ENCODE measurements at regions of chr6 and their contacts with region 1.

Region 1: GRCh38 chr6:118893807-118894424 is at the start of gene ASF1A:
- DNase-seq: peak; percentile 97 to 98 (median 97)
- H3K4me3 ChIP-seq: peak within 1 kb of the TSS; percentile 63 to 86
- H3K4me3 Mint-ChIP-seq: peak within 1 kb of the TSS; percentile 89 to 100 (median 96)
- H3K27ac ChIP-seq: peak within 1 kb of the TSS; percentile 83
- H3K27ac Mint-ChIP-seq: peak within 1 kb of the TSS; percentile 96 to 99 (median 98)
- H3K4me1 ChIP-seq: peaks cover 72% of the 10 kb centered on the region
- H3K4me1 Mint-ChIP-seq: peaks cover 48 to 78% (median 57%) of the 10 kb centered on the region in 4 donors
- H3K27me3 ChIP-seq: no peaks in the 10 kb centered on the region
- H3K27me3 Mint-ChIP-seq: peaks cover 0 to 1% of the 10 kb centered on the region in 2 donors
- total RNA-seq, gene ASF1A: 64.0 to 66.6 TPM

Region 2: GRCh38 chr6:117233145-117233544 is 1660.8 kb before region 1 on chr6:
- CTCF ChIA-PET with region 1: no interaction called
- POLR2A ChIA-PET with region 1: no interaction called
- intact Hi-C with region 1: no loop called
- DNase-seq: no peak
- H3K4me3 ChIP-seq: no peak overlapping the region
- H3K4me3 Mint-ChIP-seq: no peak overlapping the region
- H3K27ac ChIP-seq: no peak overlapping the region
- H3K27ac Mint-ChIP-seq: no peak overlapping the region
- H3K4me1 ChIP-seq: no peaks in the 10 kb centered on the region
- H3K4me1 Mint-ChIP-seq: no peaks in the 10 kb centered on the region
- H3K27me3 ChIP-seq: no peaks in the 10 kb centered on the region
- H3K27me3 Mint-ChIP-seq: peaks cover 2 to 3% of the 10 kb centered on the region in 2 donors

Region 3: DNA sequence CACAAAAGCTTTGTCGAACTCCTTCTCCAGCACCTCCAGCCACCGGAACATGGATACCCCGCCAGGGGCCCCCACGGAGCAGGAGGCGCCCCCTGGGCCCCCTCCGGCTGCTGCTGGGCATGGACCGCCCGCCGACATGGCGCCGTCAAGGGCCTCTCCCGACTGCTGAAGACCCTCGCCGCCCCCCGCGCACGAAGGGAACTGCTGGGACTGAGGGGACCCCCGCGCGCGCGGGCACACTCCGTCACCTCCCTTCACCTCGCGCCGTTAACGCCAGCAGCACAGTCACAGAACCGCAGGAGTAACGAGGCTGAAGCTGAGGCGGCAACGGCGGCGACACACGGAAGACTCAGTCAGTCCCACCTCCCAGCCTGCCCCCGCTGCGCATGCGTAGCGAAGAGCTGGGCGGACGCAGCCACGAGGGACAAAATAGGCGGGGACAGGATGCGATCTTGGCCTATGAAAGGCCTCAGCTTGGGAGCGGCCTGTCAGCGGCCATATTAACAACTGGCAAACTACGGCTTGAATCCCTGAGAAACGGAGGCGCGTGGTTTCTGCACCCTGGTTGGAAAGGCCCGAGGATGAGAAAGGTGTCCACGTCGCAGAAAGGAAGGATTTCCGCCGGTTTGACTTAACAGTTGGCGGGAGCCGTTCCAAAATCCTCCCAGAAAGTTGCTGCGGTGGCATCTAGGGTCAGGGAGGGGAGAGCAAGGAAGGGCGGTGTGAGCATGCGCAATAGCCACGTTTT is 1291.6 kb before region 1 on chr6 and contains the start of gene GOPC:
- CTCF ChIA-PET with region 1: no interaction called
- POLR2A ChIA-PET with region 1: interaction called, 3 read pairs
- intact Hi-C with region 1: loop called (anchors 1 kb)
- DNase-seq: peak; percentile 94 to 98 (median 97)
- H3K4me3 ChIP-seq: peak within 1 kb of the TSS; percentile 53 to 87
- H3K4me3 Mint-ChIP-seq: peak within 1 kb of the TSS; percentile 96 to 100 (median 100)
- H3K27ac ChIP-seq: peak within 1 kb of the TSS; percentile 75
- H3K27ac Mint-ChIP-seq: peak within 1 kb of the TSS; percentile 93 to 100 (median 99)
- H3K4me1 ChIP-seq: peaks cover 38% of the 10 kb centered on the region
- H3K4me1 Mint-ChIP-seq: peaks cover 34 to 52% (median 43%) of the 10 kb centered on the region in 4 donors
- H3K27me3 ChIP-seq: no peaks in the 10 kb centered on the region
- H3K27me3 Mint-ChIP-seq: peaks cover 0 to 3% of the 10 kb centered on the region in 2 donors
- total RNA-seq, gene GOPC: 37.7 to 37.8 TPM

Region 4: DNA sequence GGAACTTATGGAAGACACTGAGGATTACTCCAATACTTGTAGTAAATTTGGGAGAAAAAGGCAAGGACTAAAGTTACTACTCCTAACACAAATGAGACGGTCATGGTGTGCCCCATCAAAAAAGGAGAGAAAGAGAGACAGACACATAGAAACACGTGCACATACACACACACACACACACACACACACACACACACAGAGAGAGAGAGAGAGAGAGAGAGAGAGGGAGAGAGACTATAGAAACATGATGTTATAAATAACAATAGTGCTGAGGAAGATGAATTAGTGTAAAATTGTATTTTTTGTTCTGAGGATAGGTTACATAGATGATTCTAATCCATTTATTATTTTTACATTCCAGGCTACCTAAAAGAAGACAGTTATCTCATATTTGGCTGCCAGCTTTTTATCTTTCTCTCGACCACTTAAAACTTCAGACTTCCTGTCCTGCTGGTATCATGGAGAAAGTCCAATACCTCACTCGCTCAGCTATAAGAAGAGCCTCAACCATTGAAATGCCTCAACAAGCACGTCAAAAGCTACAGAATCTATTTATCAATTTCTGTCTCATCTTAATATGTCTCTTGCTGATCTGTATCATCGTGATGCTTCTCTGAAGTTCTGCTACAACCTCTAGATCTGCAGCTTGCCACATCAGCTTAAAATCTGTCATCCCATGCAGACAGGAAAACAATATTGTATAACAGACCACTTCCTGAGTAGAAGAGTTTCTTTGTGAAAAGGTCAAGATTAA is 335.3 kb before region 1 on chr6:
- CTCF ChIA-PET with region 1: interaction called, 4 read pairs
- POLR2A ChIA-PET with region 1: interaction called, 15 read pairs
- intact Hi-C with region 1: no loop called
- DNase-seq: peak; percentile 61 to 77 (median 64)
- H3K4me3 ChIP-seq: peak overlapping the region in 1 of 2 donors; percentile 21
- H3K4me3 Mint-ChIP-seq: peak overlapping the region; percentile 61 to 90 (median 80)
- H3K27ac ChIP-seq: peak overlapping the region; percentile 53
- H3K27ac Mint-ChIP-seq: peak overlapping the region; percentile 83 to 99 (median 97)
- H3K4me1 ChIP-seq: peaks cover 30% of the 10 kb centered on the region
- H3K4me1 Mint-ChIP-seq: peaks cover 31 to 57% (median 35%) of the 10 kb centered on the region in 4 donors
- H3K27me3 ChIP-seq: no peaks in the 10 kb centered on the region
- H3K27me3 Mint-ChIP-seq: no peaks in the 10 kb centered on the region

Region 5: GRCh38 chr6:118787724-118788423 is 106.0 kb before region 1 on chr6:
- CTCF ChIA-PET with region 1: interaction called, 5 read pairs
- POLR2A ChIA-PET with region 1: interaction called, 17 read pairs
- intact Hi-C with region 1: no loop called
- DNase-seq: peak; percentile 38 to 58 (median 54)
- H3K4me3 ChIP-seq: no peak overlapping the region
- H3K4me3 Mint-ChIP-seq: peak overlapping the region in 7 of 8 donors; percentile 8 to 74 (median 59)
- H3K27ac ChIP-seq: peak overlapping the region; percentile 18
- H3K27ac Mint-ChIP-seq: peak overlapping the region; percentile 77 to 97 (median 95)
- H3K4me1 ChIP-seq: peaks cover 29% of the 10 kb centered on the region
- H3K4me1 Mint-ChIP-seq: peaks cover 27 to 40% (median 34%) of the 10 kb centered on the region in 4 donors
- H3K27me3 ChIP-seq: no peaks in the 10 kb centered on the region
- H3K27me3 Mint-ChIP-seq: no peaks in the 10 kb centered on the region

Region 6: DNA sequence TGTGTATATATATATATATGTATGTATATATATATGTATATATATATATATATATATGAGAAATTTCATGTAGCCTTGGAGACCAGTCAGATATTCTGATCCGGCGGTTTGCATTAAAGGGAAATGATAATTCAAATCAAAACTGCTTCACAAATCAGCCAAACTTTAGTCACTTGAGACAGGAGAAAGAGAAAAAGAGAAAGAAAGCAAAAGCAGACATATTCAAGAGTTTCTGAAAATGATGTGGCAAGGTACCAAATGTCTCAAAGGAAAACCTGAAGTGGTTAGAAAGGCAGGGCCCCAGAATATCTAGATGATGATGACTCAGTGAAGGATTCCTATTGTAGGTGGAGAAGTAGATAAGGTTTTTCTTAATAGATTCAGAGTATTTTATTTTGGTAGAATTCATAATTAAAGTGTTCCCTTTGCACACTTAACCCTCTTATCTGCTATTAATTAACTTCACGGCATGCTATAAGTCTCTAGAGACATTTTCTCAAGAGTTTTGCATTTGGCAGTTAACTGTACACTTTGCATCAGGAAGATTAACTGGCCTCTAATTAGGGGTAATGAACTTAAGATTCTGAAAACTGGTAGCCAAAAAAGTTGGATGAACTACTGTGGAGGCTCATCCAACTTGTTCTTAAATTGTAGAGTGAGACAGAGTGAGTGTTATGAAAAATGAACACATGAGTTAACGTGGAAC is 50.1 kb before region 1 on chr6:
- CTCF ChIA-PET with region 1: interaction called, 3 read pairs
- POLR2A ChIA-PET with region 1: interaction called, 11 read pairs
- intact Hi-C with region 1: no loop called
- DNase-seq: no peak
- H3K4me3 ChIP-seq: no peak overlapping the region
- H3K4me3 Mint-ChIP-seq: no peak overlapping the region
- H3K27ac ChIP-seq: no peak overlapping the region
- H3K27ac Mint-ChIP-seq: peak overlapping the region in 3 of 7 donors; percentile 2 to 49 (median 36)
- H3K4me1 ChIP-seq: peaks cover 21% of the 10 kb centered on the region
- H3K4me1 Mint-ChIP-seq: peaks cover 18 to 27% (median 23%) of the 10 kb centered on the region in 4 donors
- H3K27me3 ChIP-seq: no peaks in the 10 kb centered on the region
- H3K27me3 Mint-ChIP-seq: no peaks in the 10 kb centered on the region

Region 7: DNA sequence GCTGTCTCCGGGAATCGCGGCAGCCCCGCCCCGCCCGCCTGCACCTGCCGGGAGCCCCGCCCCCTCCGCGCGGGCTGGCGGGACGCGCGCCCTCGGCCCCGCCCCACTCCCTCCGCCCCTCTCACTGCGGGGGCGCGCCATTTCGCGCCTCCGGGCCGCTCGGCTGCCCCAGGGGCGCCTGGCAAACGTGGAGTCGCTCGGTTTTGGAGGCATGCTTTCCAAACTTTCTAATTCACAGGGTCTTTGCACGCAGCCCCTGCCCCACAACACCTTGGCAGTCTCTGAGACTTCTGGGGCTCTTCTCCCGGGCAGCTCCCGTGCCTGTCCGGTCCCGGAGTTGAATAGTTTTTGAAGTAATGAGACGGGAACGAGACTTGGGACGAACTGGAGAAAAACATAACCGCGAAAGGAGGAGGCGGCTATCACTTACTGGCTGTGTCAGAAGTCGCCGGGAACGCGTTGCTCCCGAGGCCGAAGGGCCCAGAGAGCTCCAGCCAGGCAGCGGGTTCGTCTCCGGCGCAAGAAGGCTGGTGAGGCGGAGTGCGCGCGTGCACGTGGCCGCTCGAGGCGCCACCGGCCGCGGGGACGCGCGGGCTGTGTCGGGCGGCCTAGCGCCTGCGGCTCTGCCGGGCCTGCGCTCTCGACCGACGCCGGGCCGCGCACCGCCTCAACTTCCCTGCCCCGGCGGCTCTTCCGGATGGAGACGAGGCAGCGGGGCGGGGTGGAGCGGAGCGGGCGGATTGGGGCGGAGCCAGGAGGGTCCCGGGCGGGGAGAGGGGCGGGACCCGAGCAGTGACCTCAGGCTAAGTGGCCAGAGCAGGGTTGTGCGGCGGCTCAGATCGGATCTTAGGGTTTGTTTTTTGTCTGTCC is 40.8 kb after region 1 on chr6 and contains the start of gene MCM9:
- CTCF ChIA-PET with region 1: interaction called, 7 read pairs
- POLR2A ChIA-PET with region 1: interaction called, 65 read pairs
- intact Hi-C with region 1: loop called (anchors 1 kb)
- DNase-seq: peak; percentile 84 to 88 (median 85)
- H3K4me3 ChIP-seq: peak within 1 kb of the TSS; percentile 88 to 98
- H3K4me3 Mint-ChIP-seq: peak within 1 kb of the TSS; percentile 90 to 94 (median 91)
- H3K27ac ChIP-seq: peak within 1 kb of the TSS; percentile 84
- H3K27ac Mint-ChIP-seq: peak within 1 kb of the TSS; percentile 89 to 96 (median 93)
- H3K4me1 ChIP-seq: peaks cover 19% of the 10 kb centered on the region
- H3K4me1 Mint-ChIP-seq: peaks cover 21 to 43% (median 25%) of the 10 kb centered on the region in 4 donors
- H3K27me3 ChIP-seq: no peaks in the 10 kb centered on the region
- H3K27me3 Mint-ChIP-seq: no peaks in the 10 kb centered on the region
- total RNA-seq, gene MCM9: 33.8 to 36.6 TPM

Region 8: GRCh38 chr6:118968416-118968815 is 74.5 kb after region 1 on chr6:
- CTCF ChIA-PET with region 1: no interaction called
- POLR2A ChIA-PET with region 1: no interaction called
- intact Hi-C with region 1: no loop called
- DNase-seq: peak in 3 of 5 donors; percentile 2 to 9 (median 2)
- H3K4me3 ChIP-seq: no peak overlapping the region
- H3K4me3 Mint-ChIP-seq: no peak overlapping the region
- H3K27ac ChIP-seq: no peak overlapping the region
- H3K27ac Mint-ChIP-seq: no peak overlapping the region
- H3K4me1 ChIP-seq: no peaks in the 10 kb centered on the region
- H3K4me1 Mint-ChIP-seq: no peaks in the 10 kb centered on the region
- H3K27me3 ChIP-seq: no peaks in the 10 kb centered on the region
- H3K27me3 Mint-ChIP-seq: no peaks in the 10 kb centered on the region

Region 9: GRCh38 chr6:119349323-119350042 is 455.6 kb after region 1 on chr6 and contains the start of gene MAN1A1:
- CTCF ChIA-PET with region 1: interaction called, 4 read pairs
- POLR2A ChIA-PET with region 1: interaction called, 5 read pairs
- intact Hi-C with region 1: loop called (anchors 2 kb)
- DNase-seq: peak; percentile 85 to 93 (median 91)
- H3K4me3 ChIP-seq: peak within 1 kb of the TSS; percentile 73 to 81
- H3K4me3 Mint-ChIP-seq: peak within 1 kb of the TSS; percentile 86 to 98 (median 94)
- H3K27ac ChIP-seq: peak within 1 kb of the TSS; percentile 88
- H3K27ac Mint-ChIP-seq: peak within 1 kb of the TSS; percentile 83 to 90 (median 88)
- H3K4me1 ChIP-seq: peaks cover 33% of the 10 kb centered on the region
- H3K4me1 Mint-ChIP-seq: peaks cover 31 to 51% (median 37%) of the 10 kb centered on the region in 4 donors
- H3K27me3 ChIP-seq: no peaks in the 10 kb centered on the region
- H3K27me3 Mint-ChIP-seq: no peaks in the 10 kb centered on the region
- total RNA-seq, gene MAN1A1: 12.3 TPM

Region 10: GRCh38 chr6:120711255-120711654 is 1817.3 kb after region 1 on chr6:
- CTCF ChIA-PET with region 1: no interaction called
- POLR2A ChIA-PET with region 1: no interaction called
- intact Hi-C with region 1: no loop called
- DNase-seq: no peak
- H3K4me3 ChIP-seq: no peak overlapping the region
- H3K4me3 Mint-ChIP-seq: no peak overlapping the region
- H3K27ac ChIP-seq: no peak overlapping the region
- H3K27ac Mint-ChIP-seq: no peak overlapping the region
- H3K4me1 ChIP-seq: no peaks in the 10 kb centered on the region
- H3K4me1 Mint-ChIP-seq: no peaks in the 10 kb centered on the region
- H3K27me3 ChIP-seq: no peaks in the 10 kb centered on the region
- H3K27me3 Mint-ChIP-seq: no peaks in the 10 kb centered on the region

Measured in CD4-positive, alpha-beta memory T cell (primary cell).